ENCODE measurements at regions of chr15 and their contacts with region 1.

Region 1: GRCh38 chr15:98421419-98422129 is 226.8 kb upstream of the IGF1R start:
- DNase-seq: peak; percentile 54 to 87
- ATAC-seq: peak; percentile 67 to 90
- H3K4me3 ChIP-seq: peak overlapping the region; percentile 34
- H3K27ac ChIP-seq: no peak overlapping the region
- H3K4me1 ChIP-seq: peaks cover 12% of the 10 kb centered on the region; the same call in 2 of the 3 replicates
- CTCF ChIP-seq: peak; percentile 99
- EP300 ChIP-seq: no peak
- POLR2A ChIP-seq: no peak
- RAD21 ChIP-seq: peak; percentile 95 to 99

Region 2: GRCh38 chr15:98241030-98241554 is 180.5 kb before region 1 on chr15:
- CTCF ChIA-PET with region 1: no interaction called
- POLR2A ChIA-PET with region 1: no interaction called
- DNase-seq: no peak
- ATAC-seq: peak in 1 of 2 experiments; percentile 61; a peak in 3 of 6 replicates
- H3K4me3 ChIP-seq: no peak overlapping the region
- H3K27ac ChIP-seq: no peak overlapping the region
- H3K4me1 ChIP-seq: no peaks in the 10 kb centered on the region
- CTCF ChIP-seq: no peak
- EP300 ChIP-seq: no peak
- POLR2A ChIP-seq: no peak
- RAD21 ChIP-seq: no peak

Region 3: GRCh38 chr15:98292442-98293240 is 128.9 kb before region 1 on chr15:
- CTCF ChIA-PET with region 1: interaction called, 27 read pairs
- POLR2A ChIA-PET with region 1: no interaction called
- DNase-seq: peak; percentile 56 to 74
- ATAC-seq: peak; percentile 84 to 97
- H3K4me3 ChIP-seq: no peak overlapping the region
- H3K27ac ChIP-seq: no peak overlapping the region
- H3K4me1 ChIP-seq: no peaks in the 10 kb centered on the region
- CTCF ChIP-seq: peak; percentile 66
- EP300 ChIP-seq: no peak
- POLR2A ChIP-seq: no peak
- RAD21 ChIP-seq: peak; percentile 34 to 36; a peak in 3 of 5 replicates

Region 4: DNA sequence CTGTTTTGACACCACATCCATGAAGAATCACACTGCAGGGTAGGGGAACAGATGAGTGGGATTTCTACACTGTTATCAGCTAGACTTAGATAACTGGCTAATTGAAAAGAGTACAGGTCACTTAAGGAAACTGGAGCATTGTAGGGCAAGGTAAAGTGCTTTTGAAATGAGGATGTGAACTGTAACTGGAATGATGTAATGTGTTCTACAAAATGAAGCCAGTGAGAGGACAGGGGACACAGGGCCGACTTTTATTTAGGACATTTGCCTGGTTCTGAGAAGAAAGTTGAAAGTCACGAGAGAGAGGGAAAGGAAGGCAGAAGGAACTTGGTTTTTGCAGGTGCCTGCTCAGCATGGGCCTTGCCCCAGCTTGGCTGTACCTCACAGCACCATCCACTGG is 277.2 kb after region 1 on chr15:
- CTCF ChIA-PET with region 1: no interaction called
- POLR2A ChIA-PET with region 1: no interaction called
- DNase-seq: no peak
- ATAC-seq: no peak
- H3K4me3 ChIP-seq: no peak overlapping the region
- H3K27ac ChIP-seq: no peak overlapping the region
- H3K4me1 ChIP-seq: peaks cover 62% of the 10 kb centered on the region
- CTCF ChIP-seq: no peak
- EP300 ChIP-seq: no peak
- POLR2A ChIP-seq: no peak
- RAD21 ChIP-seq: no peak